ENCODE measurements at regions of chr5 and their contacts with region 1.

Region 1: DNA sequence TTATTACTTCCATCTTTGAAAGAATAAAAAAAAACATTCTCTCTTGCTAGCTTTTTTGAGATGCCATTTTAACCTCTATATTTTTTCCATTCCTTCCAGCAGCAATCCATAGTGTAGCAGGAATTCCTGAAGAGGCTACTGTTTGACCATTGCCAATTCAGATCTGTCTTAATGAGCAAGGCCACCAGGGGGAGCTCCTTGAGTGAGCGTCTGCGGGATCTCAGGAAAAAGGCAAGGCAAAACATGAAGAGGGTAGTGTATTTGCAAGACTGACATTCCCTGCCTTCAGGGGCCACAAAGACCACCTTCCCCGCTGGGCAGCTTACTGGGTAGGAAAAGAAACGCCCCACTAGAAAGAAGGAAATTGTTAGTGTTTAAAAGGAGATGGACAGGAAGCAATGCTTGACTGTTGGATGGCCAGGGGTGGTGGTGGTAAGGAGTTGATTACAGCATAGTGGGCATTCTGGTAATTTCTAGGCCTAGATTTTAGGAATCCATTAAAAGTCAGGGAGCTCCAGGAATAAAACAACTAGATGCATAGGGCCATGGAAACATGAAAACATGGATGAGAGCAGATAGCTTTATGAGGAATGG is 206.6 kb upstream of the HAPLN1 start:
- DNase-seq: peak in 9 of 10 donors; percentile 51 to 84 (median 69)
- H3K4me3 ChIP-seq: no peak overlapping the region
- H3K27ac ChIP-seq: no peak overlapping the region
- H3K27me3 ChIP-seq: no peaks in the 10 kb centered on the region
- CTCF ChIP-seq: peak; percentile 55 to 91 (median 83)

Region 2: GRCh38 chr5:84260140-84260539 is 332.9 kb after region 1 on chr5:
- intact Hi-C with region 1: loop called in 1 of 2 experiments (anchors 10 kb)
- DNase-seq: no peak
- H3K4me3 ChIP-seq: no peak overlapping the region
- H3K27ac ChIP-seq: peak overlapping the region in 29 of 59 donors; percentile 1 to 55 (median 32)
- H3K27me3 ChIP-seq: no peaks in the 10 kb centered on the region
- CTCF ChIP-seq: no peak

Region 3: GRCh38 chr5:84287951-84288350 is 360.7 kb after region 1 on chr5:
- intact Hi-C with region 1: loop called in 1 of 2 experiments (anchors 5 kb)
- DNase-seq: no peak
- H3K4me3 ChIP-seq: no peak overlapping the region
- H3K27ac ChIP-seq: peak overlapping the region in 53 of 59 donors; percentile 3 to 98 (median 93)
- H3K27me3 ChIP-seq: no peaks in the 10 kb centered on the region
- CTCF ChIP-seq: no peak